ENCODE measurements at regions of chr10 and their contacts with region 1.

Region 1: GRCh38 chr10:100998991-100999741 is 442 bp upstream of the LZTS2 start:
- H3K4me3 ChIP-seq: peak overlapping the region; percentile 57
- H3K27ac ChIP-seq: peak overlapping the region; percentile 94
- H3K4me1 ChIP-seq: peaks cover 8% of the 10 kb centered on the region
- CTCF ChIP-seq: peak; percentile 93

Region 2: DNA sequence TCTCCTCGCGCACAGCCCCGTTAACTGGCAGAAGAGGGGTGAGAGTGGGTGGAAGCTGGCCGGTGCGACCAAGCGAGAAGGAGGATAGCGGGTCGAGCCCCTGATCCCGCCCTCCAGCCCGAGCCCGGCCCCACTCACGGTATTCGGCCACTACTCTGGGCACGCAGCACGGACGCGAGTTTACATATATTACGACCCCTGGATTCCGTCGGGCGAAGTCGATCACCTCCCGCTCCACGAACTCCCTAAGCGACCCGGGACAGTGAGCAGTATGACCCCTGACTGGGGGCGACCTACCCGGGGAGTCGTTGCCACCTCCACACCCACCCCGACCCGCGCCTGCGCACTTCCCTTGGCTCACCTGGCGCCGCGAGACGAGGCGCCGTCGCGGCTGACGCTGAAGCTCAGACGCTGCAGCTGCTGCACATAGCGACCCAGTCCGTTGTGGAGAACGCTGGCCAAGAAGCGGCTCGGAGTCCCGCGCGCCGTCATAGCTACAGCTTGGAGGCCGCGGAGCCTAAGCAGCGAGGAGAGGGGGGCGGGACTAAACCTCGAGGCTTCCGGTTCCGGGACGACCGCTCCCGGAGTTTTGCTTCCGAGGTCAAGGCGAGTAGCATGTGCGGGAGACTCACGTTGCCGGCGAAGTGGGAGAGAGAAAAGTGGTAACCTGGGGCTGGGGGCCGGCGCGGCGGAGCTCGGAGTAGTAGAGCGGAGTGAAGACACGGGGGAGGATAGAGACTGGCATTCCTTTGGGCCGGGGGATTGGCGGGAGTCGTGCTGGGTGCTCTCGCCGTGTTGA is 12.0 kb before region 1 on chr10 and contains the starts of genes MRPL43 and TWNK:
- CTCF ChIA-PET with region 1: interaction called, 49 read pairs
- POLR2A ChIA-PET with region 1: interaction called, 6 read pairs
- H3K4me3 ChIP-seq: peak within 1 kb of the TSS; percentile 95
- H3K27ac ChIP-seq: peak within 1 kb of the TSS; percentile 82
- H3K4me1 ChIP-seq: peaks cover 6% of the 10 kb centered on the region
- CTCF ChIP-seq: no peak

Region 3: GRCh38 chr10:101073631-101074030 is 74.5 kb after region 1 on chr10:
- CTCF ChIA-PET with region 1: no interaction called
- POLR2A ChIA-PET with region 1: no interaction called
- H3K4me3 ChIP-seq: no peak overlapping the region
- H3K27ac ChIP-seq: no peak overlapping the region
- H3K4me1 ChIP-seq: no peaks in the 10 kb centered on the region
- CTCF ChIP-seq: no peak

Measured in HEK293 (cell line).